T-cell (primary cell): ENCODE measurements at regions of chr13 and their contacts with region 1.

Region 1: DNA sequence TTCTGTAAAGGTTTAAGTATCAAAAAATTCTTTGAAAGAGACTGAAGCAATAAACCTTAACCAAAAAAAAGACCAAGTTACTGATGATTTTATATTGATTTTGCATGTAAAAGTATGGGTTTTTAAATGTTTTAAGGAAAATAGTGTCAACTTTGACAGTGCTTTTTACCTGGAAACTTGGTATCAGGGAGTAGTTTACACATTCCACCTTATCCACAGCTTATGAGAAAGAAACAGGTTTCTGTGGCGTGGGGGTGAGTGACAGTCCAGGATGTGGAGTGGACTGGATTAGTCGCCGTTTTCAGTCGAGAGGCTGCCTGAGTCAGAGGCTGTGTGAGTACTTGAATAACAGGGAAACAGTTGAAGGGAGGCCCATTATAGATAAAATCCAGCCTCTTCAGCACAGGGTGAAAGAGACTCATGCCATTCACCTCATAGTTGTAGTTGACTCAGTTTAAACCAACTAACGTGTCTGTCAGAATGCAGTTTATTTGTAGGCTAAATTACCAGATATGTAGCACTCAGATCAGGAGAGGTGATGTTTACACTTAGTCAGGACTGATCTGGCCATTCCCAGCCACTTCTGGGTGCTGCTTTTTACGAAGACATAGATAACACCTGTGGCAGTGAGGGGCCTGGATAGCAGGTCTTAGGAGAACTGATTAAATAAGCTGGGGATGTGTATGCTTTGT is 595 bp upstream of the GPR183 start:
- DNase-seq: peak in 5 of 35 experiments; percentile 14 to 54 (median 45)
- ATAC-seq: peak; percentile 22 to 40 (median 29)
- H3K4me3 ChIP-seq: peak overlapping the region in 1 of 2 donors; percentile 9
- H3K4me3 Mint-ChIP-seq: peak overlapping the region; percentile 94 to 99 (median 96)
- H3K27ac ChIP-seq: peak overlapping the region; percentile 80
- H3K27ac Mint-ChIP-seq: peak overlapping the region; percentile 96
- H3K4me1 ChIP-seq: peaks cover 46 to 53% of the 10 kb centered on the region in 2 experiments
- H3K4me1 Mint-ChIP-seq: peaks cover 78 to 95% (median 83%) of the 10 kb centered on the region in 3 donors
- H3K27me3 ChIP-seq: no peaks in the 10 kb centered on the region
- H3K27me3 Mint-ChIP-seq: no peaks in the 10 kb centered on the region

Region 2: DNA sequence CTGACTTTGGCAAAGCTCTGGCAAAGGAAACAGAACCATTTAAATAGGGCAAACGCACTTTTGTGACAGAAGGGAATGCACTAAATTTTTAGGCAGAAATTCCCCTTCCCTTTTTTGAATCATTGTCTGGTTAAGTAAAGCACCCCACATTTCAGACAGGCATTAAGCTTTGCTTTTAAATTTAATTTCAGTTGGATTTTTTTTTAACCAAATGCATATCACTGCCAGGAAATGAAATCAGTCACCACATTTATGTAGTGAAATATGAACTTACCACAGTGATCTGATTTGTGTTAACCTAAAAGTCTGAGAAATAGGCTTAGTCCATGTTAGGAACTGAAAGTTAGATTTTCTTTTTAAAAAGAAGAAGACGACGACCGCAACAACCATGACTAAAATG is 11.4 kb before region 1 on chr13:
- CTCF ChIA-PET with region 1: interaction called in 1 of 2 experiments, 5 read pairs
- POLR2A ChIA-PET with region 1: interaction called, 7 to 28 read pairs
- DNase-seq: peak in 1 of 35 experiments; percentile 62
- ATAC-seq: peak; percentile 56 to 72 (median 68)
- H3K4me3 ChIP-seq: no peak overlapping the region
- H3K4me3 Mint-ChIP-seq: peak overlapping the region; percentile 67 to 85 (median 82)
- H3K27ac ChIP-seq: peak overlapping the region; percentile 80
- H3K27ac Mint-ChIP-seq: peak overlapping the region; percentile 97 to 99
- H3K4me1 ChIP-seq: peaks cover 32 to 53% of the 10 kb centered on the region in 2 experiments
- H3K4me1 Mint-ChIP-seq: peaks cover 83 to 89% (median 85%) of the 10 kb centered on the region in 3 donors
- H3K27me3 ChIP-seq: no peaks in the 10 kb centered on the region
- H3K27me3 Mint-ChIP-seq: no peaks in the 10 kb centered on the region

Region 3: DNA sequence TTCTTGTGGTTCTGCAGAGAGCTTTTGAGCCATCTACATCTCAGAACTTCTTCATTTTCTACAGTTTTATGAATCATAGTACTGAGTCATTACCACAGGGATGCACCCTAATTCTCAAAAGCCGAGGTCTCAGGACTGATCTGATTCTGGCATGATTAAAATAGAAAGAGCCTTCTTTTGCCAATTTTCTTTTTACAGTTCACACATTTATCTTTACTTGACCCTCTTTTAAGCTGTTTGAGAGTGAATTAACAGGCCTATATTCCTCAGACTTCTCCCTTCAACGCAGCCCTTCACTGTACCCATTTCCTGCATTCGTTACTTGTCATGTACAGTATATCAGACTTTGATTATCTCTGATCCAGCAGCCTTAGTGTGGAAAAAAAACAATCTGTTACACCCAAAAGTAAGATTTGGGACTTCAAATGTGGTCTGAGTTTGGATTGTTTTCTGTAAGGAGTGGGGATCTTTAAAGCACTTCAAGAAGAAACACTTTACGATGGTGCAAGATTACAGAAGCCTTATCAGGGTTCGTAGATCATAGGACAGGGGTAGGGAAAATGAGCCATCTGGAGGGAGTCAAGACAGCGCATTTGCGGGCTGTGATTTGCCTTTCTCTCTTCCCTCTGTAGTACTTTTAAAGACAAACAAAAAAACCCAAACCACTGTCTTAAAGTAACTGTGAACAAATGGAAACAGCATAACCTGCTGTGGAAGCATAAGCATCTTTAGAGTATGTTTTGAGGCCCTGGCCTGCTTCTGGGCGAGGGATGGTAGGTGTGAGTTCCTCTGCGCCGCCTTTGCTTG is 14.7 kb after region 1 on chr13:
- CTCF ChIA-PET with region 1: interaction called in 1 of 2 experiments, 4 read pairs
- POLR2A ChIA-PET with region 1: interaction called, 12 to 40 read pairs
- DNase-seq: peak in 16 of 35 experiments; percentile 6 to 75 (median 28)
- ATAC-seq: peak; percentile 85 to 91 (median 89)
- H3K4me3 ChIP-seq: peak overlapping the region in 1 of 2 donors; percentile 19
- H3K4me3 Mint-ChIP-seq: peak overlapping the region; percentile 49 to 57 (median 55)
- H3K27ac ChIP-seq: peak overlapping the region; percentile 93
- H3K27ac Mint-ChIP-seq: peak overlapping the region; percentile 92 to 98
- H3K4me1 ChIP-seq: peaks cover 28 to 50% of the 10 kb centered on the region in 2 experiments
- H3K4me1 Mint-ChIP-seq: peaks cover 73 to 86% (median 75%) of the 10 kb centered on the region in 3 donors
- H3K27me3 ChIP-seq: no peaks in the 10 kb centered on the region
- H3K27me3 Mint-ChIP-seq: no peaks in the 10 kb centered on the region